Activated T-helper 1 cell treated with anti-CD3 and anti-CD28 coated beads, Interleukin-12 subunit alpha, Interleukin-12 subunit beta, Interleukin-2, Interleukin-4 antibody, amounts not matched to agents 30 ng/mL and 10 ng/mL and 1 ng/mL, durations not matched to agents 14 hours and 24 hours and 36 hours (primary cell): ENCODE measurements at regions of chr7 and their contacts with region 1.

Region 1: GRCh38 chr7:90178679-90179278 is 24.5 kb downstream of the STEAP1 start:
- DNase-seq: peak; percentile 14
- H3K4me3 Mint-ChIP-seq: peak overlapping the region; percentile 51
- H3K27ac Mint-ChIP-seq: peak overlapping the region; percentile 93
- H3K4me1 Mint-ChIP-seq: peaks cover 29% of the 10 kb centered on the region
- H3K27me3 Mint-ChIP-seq: no peaks in the 10 kb centered on the region

Region 2: GRCh38 chr7:90081621-90082020 is 97.2 kb before region 1 on chr7:
- intact Hi-C with region 1: no loop called
- DNase-seq: no peak
- H3K4me3 Mint-ChIP-seq: no peak overlapping the region
- H3K27ac Mint-ChIP-seq: no peak overlapping the region
- H3K4me1 Mint-ChIP-seq: no peaks in the 10 kb centered on the region
- H3K27me3 Mint-ChIP-seq: no peaks in the 10 kb centered on the region

Region 3: GRCh38 chr7:90155206-90155605 is 23.6 kb before region 1 on chr7:
- intact Hi-C with region 1: loop called (anchors 2 kb)
- DNase-seq: no peak
- H3K4me3 Mint-ChIP-seq: peak overlapping the region; percentile 78
- H3K27ac Mint-ChIP-seq: peak overlapping the region; percentile 12
- H3K4me1 Mint-ChIP-seq: peaks cover 5% of the 10 kb centered on the region
- H3K27me3 Mint-ChIP-seq: peaks cover 10% of the 10 kb centered on the region

Region 4: GRCh38 chr7:90211391-90212148 is 32.8 kb after region 1 on chr7 and contains the start of gene STEAP2:
- intact Hi-C with region 1: loop called (anchors 2 kb)
- DNase-seq: peak; percentile 6
- H3K4me3 Mint-ChIP-seq: peak within 1 kb of the TSS; percentile 64
- H3K27ac Mint-ChIP-seq: no peak within 1 kb of the TSS
- H3K4me1 Mint-ChIP-seq: peaks cover 6% of the 10 kb centered on the region
- H3K27me3 Mint-ChIP-seq: peaks cover 24% of the 10 kb centered on the region
- total RNA-seq, gene STEAP2: 0.05 TPM in 1 of 2 replicates, not detected in the other

Region 5: GRCh38 chr7:90222811-90223725 is 44.3 kb after region 1 on chr7:
- intact Hi-C with region 1: no loop called
- DNase-seq: no peak
- H3K4me3 Mint-ChIP-seq: no peak overlapping the region
- H3K27ac Mint-ChIP-seq: no peak overlapping the region
- H3K4me1 Mint-ChIP-seq: no peaks in the 10 kb centered on the region
- H3K27me3 Mint-ChIP-seq: peaks cover 19% of the 10 kb centered on the region

Region 6: GRCh38 chr7:90613088-90613498 is 434.3 kb after region 1 on chr7:
- intact Hi-C with region 1: loop called (anchors 10 kb)
- DNase-seq: no peak
- H3K4me3 Mint-ChIP-seq: no peak overlapping the region
- H3K27ac Mint-ChIP-seq: peak overlapping the region; percentile 69
- H3K4me1 Mint-ChIP-seq: peaks cover 17% of the 10 kb centered on the region
- H3K27me3 Mint-ChIP-seq: no peaks in the 10 kb centered on the region